ENCODE measurements at regions of chr1 and their contacts with region 1.

Region 1: GRCh38 chr1:113963281-113963906 is 15.9 kb upstream of the OLFML3 start:
- DNase-seq: no peak
- H3K4me3 ChIP-seq: no peak overlapping the region
- H3K27ac ChIP-seq: no peak overlapping the region
- H3K27me3 ChIP-seq: no peaks in the 10 kb centered on the region
- CTCF ChIP-seq: peak; percentile 30

Region 2: DNA sequence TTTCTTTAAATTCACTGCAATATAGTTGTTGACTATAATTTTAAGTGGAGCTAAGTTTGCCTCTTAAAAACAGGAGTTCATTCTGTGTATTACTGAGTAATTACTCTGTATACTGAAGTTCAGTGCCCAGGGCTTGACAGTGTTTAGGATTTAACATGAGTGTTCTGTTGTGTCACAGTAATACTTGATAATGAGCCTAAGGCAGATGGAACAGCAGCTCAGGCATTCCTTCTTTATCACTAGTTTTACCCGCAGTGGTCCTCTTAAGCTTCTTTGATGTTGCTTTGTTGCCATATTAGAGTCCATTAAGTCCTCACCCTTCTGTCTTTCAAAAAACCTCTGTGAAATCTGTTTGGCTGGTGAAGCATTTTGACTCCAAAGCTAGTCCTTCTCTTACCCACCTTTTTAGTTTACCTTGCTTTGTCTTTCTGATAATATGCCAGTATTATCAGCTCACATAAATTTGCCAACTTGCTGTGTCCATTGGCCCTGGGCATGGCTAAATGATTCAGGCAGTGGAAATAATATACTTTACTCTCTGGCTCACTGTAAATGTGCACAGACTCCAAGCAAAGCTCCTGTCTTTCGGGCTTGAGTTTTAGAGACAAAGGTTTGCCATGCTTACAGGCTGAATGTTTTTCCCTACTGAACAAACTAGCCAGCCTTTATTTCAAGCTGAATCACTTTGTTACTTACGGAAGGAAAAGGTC is 16.6 kb before region 1 on chr1:
- CTCF ChIA-PET with region 1: interaction called, 12 read pairs
- POLR2A ChIA-PET with region 1: no interaction called
- DNase-seq: no peak
- H3K4me3 ChIP-seq: no peak overlapping the region
- H3K27ac ChIP-seq: no peak overlapping the region
- H3K27me3 ChIP-seq: no peaks in the 10 kb centered on the region
- CTCF ChIP-seq: no peak

Region 3: GRCh38 chr1:113984710-113985109 is 21.3 kb after region 1 on chr1:
- CTCF ChIA-PET with region 1: no interaction called
- POLR2A ChIA-PET with region 1: no interaction called
- DNase-seq: no peak
- H3K4me3 ChIP-seq: no peak overlapping the region
- H3K27ac ChIP-seq: no peak overlapping the region
- H3K27me3 ChIP-seq: no peaks in the 10 kb centered on the region
- CTCF ChIP-seq: no peak

Measured in AG04450 (cell line).